Naive thymus-derived CD4-positive, alpha-beta T cell (primary cell): ENCODE measurements at regions of chr1 and their contacts with region 1.

Region 1: GRCh38 chr1:169711469-169712281 is at the start of gene SELL:
- DNase-seq: peak; percentile 21 to 83 (median 76)
- ATAC-seq: peak; percentile 91
- H3K4me3 ChIP-seq: peak within 1 kb of the TSS; percentile 62
- H3K4me3 Mint-ChIP-seq: peak within 1 kb of the TSS in 9 of 10 donors; percentile 90 to 99 (median 97)
- H3K27ac ChIP-seq: peak within 1 kb of the TSS; percentile 70
- H3K27ac Mint-ChIP-seq: peak within 1 kb of the TSS in 8 of 9 donors; percentile 85 to 98 (median 94)
- H3K4me1 ChIP-seq: peaks cover 3 to 7% of the 10 kb centered on the region in 2 donors
- H3K4me1 Mint-ChIP-seq: peaks cover 6 to 32% (median 20%) of the 10 kb centered on the region in 7 donors
- H3K27me3 ChIP-seq: no peaks in the 10 kb centered on the region
- H3K27me3 Mint-ChIP-seq: peaks cover 0 to 30% (median 0%) of the 10 kb centered on the region in 5 donors
- total RNA-seq, gene SELL: 303 to 633 (median 519) TPM

Region 2: DNA sequence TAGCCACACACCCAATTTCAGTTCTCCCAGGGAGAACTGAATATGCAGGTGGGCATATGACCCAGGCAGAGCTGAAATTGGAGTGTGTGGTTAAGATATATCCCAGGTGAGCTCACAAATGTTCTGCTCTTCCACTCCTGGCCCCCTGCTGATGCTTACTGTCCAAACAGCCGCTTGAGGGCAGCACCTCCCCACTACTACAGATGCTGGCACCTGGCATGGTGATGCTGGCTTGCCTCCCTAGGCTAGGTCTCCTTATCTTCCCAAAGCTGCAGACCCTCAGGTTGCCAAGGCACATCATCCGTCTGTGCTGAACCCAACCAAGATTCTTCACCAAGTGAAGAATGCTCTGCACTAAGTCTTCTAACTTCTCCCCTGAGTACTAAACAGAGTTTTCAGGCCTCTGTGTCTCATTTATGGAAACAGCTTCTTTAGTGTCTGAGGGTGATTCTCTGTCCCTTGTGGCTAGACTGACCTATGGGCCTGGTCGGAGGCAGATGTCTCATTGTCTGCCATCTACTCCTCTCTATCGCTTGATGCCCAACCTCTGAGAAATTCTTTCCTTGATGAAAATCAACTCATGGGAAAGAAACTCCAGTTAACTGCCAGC is 1108.1 kb before region 1 on chr1:
- CTCF ChIA-PET with region 1: no interaction called
- POLR2A ChIA-PET with region 1: no interaction called
- intact Hi-C with region 1: loop called in 1 of 2 experiments (anchors 10 kb)
- DNase-seq: peak; percentile 42 to 72 (median 58)
- ATAC-seq: peak; percentile 89
- H3K4me3 ChIP-seq: no peak overlapping the region
- H3K4me3 Mint-ChIP-seq: no peak overlapping the region
- H3K27ac ChIP-seq: no peak overlapping the region
- H3K27ac Mint-ChIP-seq: no peak overlapping the region
- H3K4me1 ChIP-seq: no peaks in the 10 kb centered on the region
- H3K4me1 Mint-ChIP-seq: peaks cover 0 to 7% (median 0%) of the 10 kb centered on the region in 7 donors
- H3K27me3 ChIP-seq: peaks cover 0 to 4% of the 10 kb centered on the region in 2 donors
- H3K27me3 Mint-ChIP-seq: peaks cover 0 to 30% (median 1%) of the 10 kb centered on the region in 5 donors

Region 3: DNA sequence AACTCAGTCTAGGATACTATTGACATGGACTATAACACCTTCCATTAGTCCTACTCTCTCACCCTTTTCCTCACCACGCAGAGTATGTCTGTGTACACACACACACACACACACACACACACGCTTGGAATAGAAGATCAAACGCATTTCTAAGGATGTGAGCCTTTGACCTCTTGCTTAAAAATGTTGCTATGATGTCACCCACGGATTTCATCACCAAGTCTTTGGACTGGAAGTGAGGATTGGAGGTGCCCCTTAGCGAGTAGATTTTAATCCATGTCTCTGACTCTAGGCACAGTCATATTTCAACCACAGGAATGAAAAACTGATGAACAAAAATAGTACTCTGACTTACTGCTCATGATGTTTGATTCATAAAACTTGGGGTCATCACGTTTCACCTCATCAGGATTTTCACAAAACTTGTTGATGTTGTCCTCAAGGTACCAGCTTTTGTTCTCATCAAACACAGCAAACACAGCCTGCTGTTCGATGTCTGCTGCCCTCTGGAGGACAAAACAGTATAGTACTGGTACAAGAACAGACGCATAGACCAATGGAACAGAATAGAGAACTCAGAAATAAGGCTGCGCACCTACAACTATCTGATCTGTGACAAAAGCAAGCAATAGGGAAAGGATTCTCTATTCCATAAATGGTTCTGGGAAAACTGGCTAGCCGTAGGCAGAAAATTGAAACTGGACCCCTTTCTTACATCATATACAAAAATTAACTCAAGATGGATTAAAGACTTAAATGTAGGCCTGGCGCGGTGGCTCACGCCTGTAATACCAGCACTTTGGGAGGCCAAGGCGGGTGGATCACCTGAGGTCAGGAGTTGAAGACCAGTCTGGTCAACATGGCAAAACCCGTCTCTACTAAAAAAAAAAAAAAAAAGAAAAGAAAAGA is 165.3 kb before region 1 on chr1:
- CTCF ChIA-PET with region 1: interaction called, 47 read pairs
- POLR2A ChIA-PET with region 1: no interaction called
- intact Hi-C with region 1: loop called (anchors 1 kb)
- DNase-seq: peak in 7 of 9 donors; percentile 40 to 73 (median 68)
- ATAC-seq: peak; percentile 92
- H3K4me3 ChIP-seq: no peak overlapping the region
- H3K4me3 Mint-ChIP-seq: no peak overlapping the region
- H3K27ac ChIP-seq: no peak overlapping the region
- H3K27ac Mint-ChIP-seq: peak overlapping the region in 1 of 9 donors; percentile 7
- H3K4me1 ChIP-seq: no peaks in the 10 kb centered on the region
- H3K4me1 Mint-ChIP-seq: peaks cover 0 to 14% (median 0%) of the 10 kb centered on the region in 7 donors
- H3K27me3 ChIP-seq: no peaks in the 10 kb centered on the region
- H3K27me3 Mint-ChIP-seq: no peaks in the 10 kb centered on the region

Region 4: DNA sequence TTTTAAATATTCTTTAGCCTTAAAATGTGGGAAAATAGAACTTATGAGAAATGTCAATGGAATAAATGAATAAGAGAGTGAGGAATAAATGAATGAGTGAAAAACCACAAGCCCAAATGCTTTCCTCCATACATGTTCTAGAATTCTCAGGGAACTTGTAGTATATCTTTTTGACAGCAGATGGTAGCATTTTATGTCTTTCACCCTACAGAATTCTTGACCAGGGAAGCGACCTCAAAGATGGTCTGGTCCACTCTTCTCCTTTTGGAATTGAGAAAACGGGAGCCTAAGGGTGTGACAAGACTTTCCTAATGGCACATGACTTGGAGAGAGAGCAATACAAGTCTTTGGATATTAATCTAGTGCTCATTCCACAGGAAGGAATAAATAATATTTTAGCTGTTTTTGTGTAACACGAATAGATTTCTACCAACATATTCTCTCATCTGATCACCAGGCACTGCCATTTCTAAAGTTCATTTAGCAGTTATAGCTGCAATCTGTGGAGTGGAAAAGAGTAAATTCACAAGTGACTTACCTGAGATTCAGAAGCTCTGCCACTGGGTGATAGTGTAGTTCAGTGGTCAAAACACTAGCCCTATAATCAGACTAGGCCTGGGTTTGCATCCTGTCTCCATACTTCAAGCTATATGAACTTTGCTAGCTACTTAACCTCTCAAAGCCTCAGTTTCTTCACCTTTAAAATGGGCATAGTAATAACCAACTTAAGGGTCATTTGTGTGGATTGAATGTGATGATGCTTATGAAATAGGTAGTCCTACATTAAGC is 110.4 kb before region 1 on chr1:
- CTCF ChIA-PET with region 1: interaction called, 149 read pairs
- POLR2A ChIA-PET with region 1: interaction called, 75 read pairs
- intact Hi-C with region 1: loop called (anchors 1 kb)
- DNase-seq: peak in 6 of 9 donors; percentile 17 to 51 (median 36)
- ATAC-seq: no peak
- H3K4me3 ChIP-seq: no peak overlapping the region
- H3K4me3 Mint-ChIP-seq: peak overlapping the region in 6 of 10 donors; percentile 38 to 79 (median 54)
- H3K27ac ChIP-seq: peak overlapping the region; percentile 61
- H3K27ac Mint-ChIP-seq: peak overlapping the region; percentile 47 to 96 (median 89)
- H3K4me1 ChIP-seq: peaks cover 17 to 49% of the 10 kb centered on the region in 2 donors
- H3K4me1 Mint-ChIP-seq: peaks cover 43 to 58% (median 55%) of the 10 kb centered on the region in 7 donors
- H3K27me3 ChIP-seq: no peaks in the 10 kb centered on the region
- H3K27me3 Mint-ChIP-seq: peaks cover 0 to 2% (median 0%) of the 10 kb centered on the region in 5 donors

Region 5: GRCh38 chr1:169694304-169695075 is 17.2 kb before region 1 on chr1:
- CTCF ChIA-PET with region 1: interaction called, 121 read pairs
- POLR2A ChIA-PET with region 1: interaction called, 216 read pairs
- intact Hi-C with region 1: loop called (anchors 1 kb)
- DNase-seq: peak in 7 of 9 donors; percentile 63 to 85 (median 76)
- ATAC-seq: peak; percentile 71
- H3K4me3 ChIP-seq: peak overlapping the region; percentile 18
- H3K4me3 Mint-ChIP-seq: peak overlapping the region in 9 of 10 donors; percentile 21 to 86 (median 71)
- H3K27ac ChIP-seq: peak overlapping the region; percentile 70
- H3K27ac Mint-ChIP-seq: peak overlapping the region in 4 of 9 donors; percentile 86 to 98 (median 94)
- H3K4me1 ChIP-seq: peaks cover 91 to 92% of the 10 kb centered on the region in 2 donors
- H3K4me1 Mint-ChIP-seq: peaks cover 0 to 89% (median 74%) of the 10 kb centered on the region in 7 donors
- H3K27me3 ChIP-seq: no peaks in the 10 kb centered on the region
- H3K27me3 Mint-ChIP-seq: no peaks in the 10 kb centered on the region

Region 6: DNA sequence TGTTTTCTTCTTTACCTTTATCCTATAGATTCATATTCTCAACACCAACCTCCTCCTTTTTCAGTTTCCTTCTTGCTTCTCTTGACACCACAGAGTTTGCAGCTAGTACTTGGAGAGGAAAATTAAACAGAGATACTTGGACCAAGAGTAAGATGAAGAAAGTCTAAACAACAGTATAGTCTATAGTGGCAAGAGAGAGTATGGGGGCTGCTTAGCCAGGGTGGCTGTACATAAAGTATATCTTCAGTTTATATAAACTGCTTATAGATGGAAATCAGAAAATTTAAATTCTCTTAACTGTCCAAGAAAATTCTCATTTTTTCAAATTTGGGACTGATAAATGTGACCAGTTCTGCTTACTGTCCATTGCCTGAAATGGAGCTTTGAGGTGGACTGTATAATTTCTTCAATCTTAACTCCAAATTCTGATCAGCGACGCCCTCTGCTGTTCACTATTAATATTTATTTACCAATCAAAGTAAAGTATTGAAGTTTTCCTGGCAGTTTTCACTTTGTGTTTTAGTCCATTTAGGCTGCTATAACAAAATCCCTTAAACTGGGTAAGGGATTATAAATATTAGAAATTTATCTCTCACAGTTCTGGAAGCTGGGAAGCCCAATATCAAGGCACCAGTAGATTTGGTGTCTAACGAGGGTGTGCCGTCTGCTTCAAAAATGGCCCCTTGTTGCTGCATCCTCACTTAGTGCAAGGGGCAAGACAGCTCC is 97.9 kb after region 1 on chr1:
- CTCF ChIA-PET with region 1: interaction called, 6 read pairs
- POLR2A ChIA-PET with region 1: no interaction called
- intact Hi-C with region 1: loop called in 1 of 2 experiments (anchors 1 kb)
- DNase-seq: peak in 6 of 9 donors; percentile 3 to 44 (median 33)
- ATAC-seq: peak; percentile 65
- H3K4me3 ChIP-seq: no peak overlapping the region
- H3K4me3 Mint-ChIP-seq: no peak overlapping the region
- H3K27ac ChIP-seq: no peak overlapping the region
- H3K27ac Mint-ChIP-seq: no peak overlapping the region
- H3K4me1 ChIP-seq: no peaks in the 10 kb centered on the region
- H3K4me1 Mint-ChIP-seq: peaks cover 0 to 16% (median 0%) of the 10 kb centered on the region in 7 donors
- H3K27me3 ChIP-seq: no peaks in the 10 kb centered on the region
- H3K27me3 Mint-ChIP-seq: no peaks in the 10 kb centered on the region